Panc1 (cell line): ENCODE measurements at regions of chr9 and their contacts with region 1.

Region 1: GRCh38 chr9:32218100-32218767 is 166.2 kb upstream of the ACO1 start:
- DNase-seq: no peak
- ATAC-seq: no peak
- H3K4me3 ChIP-seq: no peak overlapping the region
- H3K27ac ChIP-seq: no peak overlapping the region
- H3K4me1 ChIP-seq: no peaks in the 10 kb centered on the region
- H3K27me3 ChIP-seq: no peaks in the 10 kb centered on the region
- CTCF ChIP-seq: no peak

Region 2: DNA sequence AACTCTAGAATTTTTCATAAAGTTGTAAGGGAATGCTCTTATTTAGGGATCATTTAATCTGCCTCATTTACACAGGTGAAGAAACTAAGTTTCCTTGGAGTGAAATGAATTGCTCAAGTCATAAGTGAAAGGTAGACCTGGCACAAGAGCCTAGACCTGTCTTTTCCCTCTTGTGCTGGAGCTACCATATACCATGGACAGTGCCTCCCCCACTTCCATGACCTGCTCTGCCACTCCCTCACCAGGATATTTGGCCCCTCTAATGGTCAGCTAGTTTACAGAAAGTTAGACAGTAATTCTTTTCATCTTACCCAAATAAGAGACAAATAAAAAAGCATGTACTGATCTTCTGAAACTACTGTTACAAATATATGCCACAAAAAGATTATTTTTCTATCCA is 60.8 kb after region 1 on chr9:
- CTCF ChIA-PET with region 1: no interaction called
- POLR2A ChIA-PET with region 1: no interaction called
- in situ Hi-C with region 1: no loop called
- intact Hi-C with region 1: loop called (anchors 10 kb)
- DNase-seq: no peak
- ATAC-seq: no peak
- H3K4me3 ChIP-seq: no peak overlapping the region
- H3K27ac ChIP-seq: no peak overlapping the region
- H3K4me1 ChIP-seq: no peaks in the 10 kb centered on the region
- H3K27me3 ChIP-seq: no peaks in the 10 kb centered on the region
- CTCF ChIP-seq: no peak

Region 3: DNA sequence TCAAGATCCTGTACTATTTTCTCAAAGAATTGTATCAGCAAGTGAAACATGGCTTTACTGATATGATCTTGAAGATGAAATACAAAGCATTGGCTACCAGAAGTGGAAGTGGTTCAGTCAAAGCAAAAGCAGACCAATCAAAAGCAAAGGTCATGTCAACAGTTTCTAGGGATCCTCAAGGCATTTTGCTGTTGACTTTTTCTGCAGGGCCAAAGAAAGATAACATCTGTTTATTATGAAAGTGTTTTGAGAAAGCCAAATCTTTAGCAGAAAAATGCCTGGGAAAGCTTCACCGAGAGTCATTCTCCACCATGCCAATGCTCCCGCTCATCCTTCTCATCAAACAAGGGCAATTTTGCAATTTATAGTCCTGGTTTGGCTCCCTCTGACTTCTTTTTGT is 75.9 kb after region 1 on chr9:
- CTCF ChIA-PET with region 1: no interaction called
- POLR2A ChIA-PET with region 1: no interaction called
- in situ Hi-C with region 1: no loop called
- intact Hi-C with region 1: no loop called
- DNase-seq: no peak
- ATAC-seq: no peak
- H3K4me3 ChIP-seq: no peak overlapping the region
- H3K27ac ChIP-seq: no peak overlapping the region
- H3K4me1 ChIP-seq: no peaks in the 10 kb centered on the region; the same call in 1 of the 2 replicates
- H3K27me3 ChIP-seq: no peaks in the 10 kb centered on the region
- CTCF ChIP-seq: no peak